ENCODE measurements at regions of chr10 and their contacts with region 1.

Region 1: GRCh38 chr10:100433253-100434240 is 29.3 kb upstream of the WNT8B start:
- DNase-seq: peak; percentile 84 to 87 (median 85)
- H3K4me3 ChIP-seq: no peak overlapping the region
- H3K4me3 Mint-ChIP-seq: no peak overlapping the region
- H3K27ac ChIP-seq: no peak overlapping the region
- H3K27ac Mint-ChIP-seq: no peak overlapping the region
- H3K4me1 ChIP-seq: no peaks in the 10 kb centered on the region
- H3K4me1 Mint-ChIP-seq: no peaks in the 10 kb centered on the region
- H3K27me3 ChIP-seq: no peaks in the 10 kb centered on the region
- H3K27me3 Mint-ChIP-seq: peaks cover 3 to 7% (median 4%) of the 10 kb centered on the region in 3 donors
- CTCF ChIP-seq: peak; percentile 98

Region 2: DNA sequence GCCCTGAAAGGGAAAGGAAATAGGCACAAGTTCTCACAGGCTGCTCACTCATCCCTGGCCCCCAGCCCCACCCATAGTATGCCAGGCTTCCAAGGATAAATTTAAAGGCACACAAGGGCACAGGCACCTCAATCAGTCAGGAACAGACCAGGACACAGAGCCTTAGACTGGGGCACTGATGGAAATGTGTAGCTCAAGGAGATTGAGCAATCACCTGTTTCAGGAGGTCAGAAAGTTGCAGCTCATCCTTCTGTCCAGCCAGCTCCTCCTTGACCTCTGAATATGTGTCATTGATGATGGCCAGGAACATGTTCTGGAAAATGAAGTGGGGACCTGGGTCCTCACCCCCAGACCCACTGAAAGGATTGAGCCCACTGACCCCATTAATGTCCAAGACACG is 140.5 kb before region 1 on chr10:
- intact Hi-C with region 1: no loop called
- DNase-seq: no peak
- H3K4me3 ChIP-seq: no peak overlapping the region
- H3K4me3 Mint-ChIP-seq: no peak overlapping the region
- H3K27ac ChIP-seq: peak overlapping the region in 1 of 2 donors; percentile 77
- H3K27ac Mint-ChIP-seq: peak overlapping the region in 2 of 7 donors; percentile 15 to 41
- H3K4me1 ChIP-seq: peaks cover 46 to 47% of the 10 kb centered on the region in 2 donors
- H3K4me1 Mint-ChIP-seq: peaks cover 50% of the 10 kb centered on the region
- H3K27me3 ChIP-seq: peaks cover 0 to 2% of the 10 kb centered on the region in 2 donors
- H3K27me3 Mint-ChIP-seq: peaks cover 14 to 21% (median 21%) of the 10 kb centered on the region in 3 donors
- CTCF ChIP-seq: no peak

Region 3: GRCh38 chr10:100303724-100304319 is 129.7 kb before region 1 on chr10:
- intact Hi-C with region 1: loop called in 1 of 2 experiments (anchors 10 kb)
- DNase-seq: peak in 2 of 3 donors; percentile 21 to 49
- H3K4me3 ChIP-seq: no peak overlapping the region
- H3K4me3 Mint-ChIP-seq: peak overlapping the region in 1 of 2 donors; percentile 27
- H3K27ac ChIP-seq: no peak overlapping the region
- H3K27ac Mint-ChIP-seq: no peak overlapping the region
- H3K4me1 ChIP-seq: no peaks in the 10 kb centered on the region
- H3K4me1 Mint-ChIP-seq: no peaks in the 10 kb centered on the region
- H3K27me3 ChIP-seq: peaks cover 6 to 12% of the 10 kb centered on the region in 2 donors
- H3K27me3 Mint-ChIP-seq: peaks cover 12 to 32% (median 18%) of the 10 kb centered on the region in 3 donors
- CTCF ChIP-seq: peak; percentile 79

Region 4: GRCh38 chr10:100403734-100404133 is 29.8 kb before region 1 on chr10:
- intact Hi-C with region 1: no loop called
- DNase-seq: no peak
- H3K4me3 ChIP-seq: no peak overlapping the region
- H3K4me3 Mint-ChIP-seq: no peak overlapping the region
- H3K27ac ChIP-seq: no peak overlapping the region
- H3K27ac Mint-ChIP-seq: no peak overlapping the region
- H3K4me1 ChIP-seq: no peaks in the 10 kb centered on the region
- H3K4me1 Mint-ChIP-seq: no peaks in the 10 kb centered on the region
- H3K27me3 ChIP-seq: no peaks in the 10 kb centered on the region
- H3K27me3 Mint-ChIP-seq: peaks cover 0 to 4% (median 4%) of the 10 kb centered on the region in 3 donors
- CTCF ChIP-seq: no peak

Region 5: GRCh38 chr10:100518761-100519241 is 85.3 kb after region 1 on chr10:
- intact Hi-C with region 1: loop called in 1 of 2 experiments (anchors 5 kb)
- DNase-seq: peak; percentile 19 to 59 (median 37)
- H3K4me3 ChIP-seq: no peak overlapping the region
- H3K4me3 Mint-ChIP-seq: peak overlapping the region in 1 of 2 donors; percentile 84
- H3K27ac ChIP-seq: no peak overlapping the region
- H3K27ac Mint-ChIP-seq: no peak overlapping the region
- H3K4me1 ChIP-seq: peaks cover 5 to 10% of the 10 kb centered on the region in 2 donors
- H3K4me1 Mint-ChIP-seq: peaks cover 12% of the 10 kb centered on the region
- H3K27me3 ChIP-seq: peaks cover 16 to 18% of the 10 kb centered on the region in 2 donors
- H3K27me3 Mint-ChIP-seq: peaks cover 20 to 24% (median 22%) of the 10 kb centered on the region in 3 donors
- CTCF ChIP-seq: peak; percentile 82

Region 6: GRCh38 chr10:101257084-101257483 is 823.5 kb after region 1 on chr10:
- intact Hi-C with region 1: no loop called
- DNase-seq: no peak
- H3K4me3 ChIP-seq: no peak overlapping the region
- H3K4me3 Mint-ChIP-seq: no peak overlapping the region
- H3K27ac ChIP-seq: no peak overlapping the region
- H3K27ac Mint-ChIP-seq: no peak overlapping the region
- H3K4me1 ChIP-seq: no peaks in the 10 kb centered on the region
- H3K4me1 Mint-ChIP-seq: no peaks in the 10 kb centered on the region
- H3K27me3 ChIP-seq: peaks cover 9 to 40% of the 10 kb centered on the region in 2 donors
- H3K27me3 Mint-ChIP-seq: peaks cover 29 to 60% (median 35%) of the 10 kb centered on the region in 3 donors
- CTCF ChIP-seq: no peak